GM10248 (cell line): ENCODE measurements at regions of chr12 and their contacts with region 1.

Region 1: DNA sequence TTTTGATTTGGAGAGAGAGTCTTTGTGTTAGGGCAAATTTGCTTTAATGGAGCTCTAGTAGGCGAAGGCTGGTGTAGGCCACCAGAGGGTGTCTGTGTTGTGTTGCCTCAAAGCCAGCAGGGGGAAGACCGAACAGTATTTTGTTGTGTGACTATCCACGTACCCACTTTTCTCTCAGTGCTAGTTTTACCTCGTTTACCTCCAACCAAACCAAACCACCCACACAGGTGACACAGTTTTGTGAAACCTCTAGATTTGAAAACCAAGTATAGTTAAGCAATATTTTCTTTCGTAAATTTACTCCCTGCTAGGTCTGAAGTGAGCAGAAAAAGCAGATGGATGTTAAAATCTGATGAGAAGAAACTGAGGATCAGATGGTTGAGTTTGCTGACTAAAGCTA is 36.3 kb upstream of the NPFF start:
- DNase-seq: peak; percentile 78
- CTCF ChIP-seq: peak; percentile 75

Region 2: GRCh38 chr12:53530920-53531319 is 12.6 kb before region 1 on chr12:
- CTCF ChIA-PET with region 1: interaction called, 15 read pairs
- POLR2A ChIA-PET with region 1: no interaction called
- DNase-seq: no peak
- CTCF ChIP-seq: no peak

Region 3: GRCh38 chr12:53575502-53576253 is 32.1 kb after region 1 on chr12:
- CTCF ChIA-PET with region 1: interaction called, 45 read pairs
- POLR2A ChIA-PET with region 1: no interaction called
- DNase-seq: no peak
- CTCF ChIP-seq: no peak

Region 4: GRCh38 chr12:53603804-53604203 is 60.3 kb after region 1 on chr12:
- CTCF ChIA-PET with region 1: no interaction called
- POLR2A ChIA-PET with region 1: no interaction called
- DNase-seq: no peak
- CTCF ChIP-seq: no peak

Region 5: GRCh38 chr12:53625946-53626701 is 82.6 kb after region 1 on chr12 and contains the start of gene ATF7:
- CTCF ChIA-PET with region 1: interaction called, 14 read pairs
- POLR2A ChIA-PET with region 1: no interaction called
- DNase-seq: peak; percentile 97
- CTCF ChIP-seq: no peak

Region 6: DNA sequence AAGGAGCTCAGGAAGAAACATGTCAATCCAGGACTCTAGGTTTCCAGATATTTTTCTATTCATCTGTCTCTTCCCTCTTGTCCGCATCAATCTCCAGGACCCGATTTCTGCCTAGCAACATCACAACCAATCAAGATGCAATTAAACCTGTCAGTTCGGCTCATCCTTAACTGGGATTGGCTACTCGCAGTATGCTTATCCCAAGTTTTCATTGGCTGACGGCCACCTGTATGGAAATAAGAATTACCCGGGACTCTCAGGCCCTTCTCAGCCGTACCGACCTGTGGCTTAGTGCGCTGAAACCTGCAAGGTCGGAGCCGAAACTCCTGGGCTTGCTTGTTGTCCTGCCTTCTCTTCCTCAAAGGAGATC is 152.7 kb after region 1 on chr12:
- CTCF ChIA-PET with region 1: interaction called, 11 read pairs
- POLR2A ChIA-PET with region 1: no interaction called
- DNase-seq: peak; percentile 77
- CTCF ChIP-seq: no peak